ENCODE measurements at regions of chr16 and their contacts with region 1.

Region 1: GRCh38 chr16:89330177-89330856 is 112.8 kb downstream of the ZNF778 start:
- DNase-seq: peak in 6 of 9 experiments; percentile 23 to 85 (median 51)
- ATAC-seq: peak; percentile 55
- H3K4me3 ChIP-seq: peak overlapping the region; percentile 16 to 43
- H3K4me3 Mint-ChIP-seq: peak overlapping the region; percentile 60
- H3K27ac ChIP-seq: peak overlapping the region; percentile 45 to 81
- H3K27ac Mint-ChIP-seq: peak overlapping the region; percentile 73
- H3K4me1 ChIP-seq: peaks cover 77% of the 10 kb centered on the region
- H3K4me1 Mint-ChIP-seq: peaks cover 83% of the 10 kb centered on the region
- H3K27me3 ChIP-seq: no peaks in the 10 kb centered on the region
- H3K27me3 Mint-ChIP-seq: no peaks in the 10 kb centered on the region
- CTCF ChIP-seq: no peak

Region 2: DNA sequence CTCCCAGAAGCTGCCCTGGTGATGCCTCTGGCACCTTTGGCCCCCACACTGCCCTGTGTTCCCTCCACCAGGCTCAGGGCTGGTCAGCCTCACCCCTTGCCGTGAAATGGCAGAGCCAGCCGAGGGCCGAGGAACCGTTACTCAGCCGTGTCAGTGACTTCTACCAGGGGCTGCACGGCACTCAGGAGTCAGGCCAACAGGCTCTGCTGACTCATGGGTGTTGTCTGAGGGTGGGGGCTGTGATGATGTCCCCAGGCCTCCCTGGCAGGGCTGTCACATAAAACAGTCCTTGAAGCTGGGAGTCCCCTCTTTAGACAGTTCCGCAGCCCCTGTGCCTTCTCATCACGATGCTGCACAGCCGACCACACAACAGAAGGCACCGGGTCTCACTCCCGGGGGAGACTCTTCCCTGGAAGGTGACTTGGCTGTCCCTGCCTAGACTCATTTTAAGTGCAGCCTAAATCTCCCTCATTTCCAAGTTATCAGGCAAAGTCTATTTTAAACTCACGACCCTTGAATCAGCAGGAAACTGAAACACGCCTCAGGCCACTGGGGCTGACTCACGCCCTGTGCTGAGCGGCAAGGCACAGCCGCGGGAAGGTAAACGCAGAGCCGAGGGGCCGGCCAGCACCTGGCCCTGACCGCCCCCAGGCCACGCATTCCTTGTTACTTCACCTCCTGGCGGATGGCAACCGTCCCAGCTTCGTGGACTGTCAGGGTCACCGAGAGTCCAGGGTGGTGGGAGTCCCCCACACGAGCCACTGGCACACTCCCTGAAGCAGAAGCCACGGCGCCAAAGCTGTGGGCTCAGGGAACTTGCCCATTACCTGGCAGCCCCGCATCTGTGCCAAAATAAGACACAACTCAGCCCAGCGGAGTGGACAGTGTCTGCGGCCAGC is 10.2 kb before region 1 on chr16:
- CTCF ChIA-PET with region 1: interaction called, 5 read pairs
- POLR2A ChIA-PET with region 1: interaction called, 5 read pairs
- intact Hi-C with region 1: loop called in 1 of 2 experiments (anchors 2 kb)
- DNase-seq: peak in 6 of 9 experiments; percentile 17 to 52 (median 40)
- ATAC-seq: no peak
- H3K4me3 ChIP-seq: peak overlapping the region in 1 of 2 experiments; percentile 12
- H3K4me3 Mint-ChIP-seq: peak overlapping the region; percentile 57
- H3K27ac ChIP-seq: peak overlapping the region in 1 of 2 experiments; percentile 43
- H3K27ac Mint-ChIP-seq: peak overlapping the region; percentile 77
- H3K4me1 ChIP-seq: peaks cover 88% of the 10 kb centered on the region
- H3K4me1 Mint-ChIP-seq: peaks cover 92% of the 10 kb centered on the region
- H3K27me3 ChIP-seq: no peaks in the 10 kb centered on the region
- H3K27me3 Mint-ChIP-seq: no peaks in the 10 kb centered on the region
- CTCF ChIP-seq: no peak

Region 3: DNA sequence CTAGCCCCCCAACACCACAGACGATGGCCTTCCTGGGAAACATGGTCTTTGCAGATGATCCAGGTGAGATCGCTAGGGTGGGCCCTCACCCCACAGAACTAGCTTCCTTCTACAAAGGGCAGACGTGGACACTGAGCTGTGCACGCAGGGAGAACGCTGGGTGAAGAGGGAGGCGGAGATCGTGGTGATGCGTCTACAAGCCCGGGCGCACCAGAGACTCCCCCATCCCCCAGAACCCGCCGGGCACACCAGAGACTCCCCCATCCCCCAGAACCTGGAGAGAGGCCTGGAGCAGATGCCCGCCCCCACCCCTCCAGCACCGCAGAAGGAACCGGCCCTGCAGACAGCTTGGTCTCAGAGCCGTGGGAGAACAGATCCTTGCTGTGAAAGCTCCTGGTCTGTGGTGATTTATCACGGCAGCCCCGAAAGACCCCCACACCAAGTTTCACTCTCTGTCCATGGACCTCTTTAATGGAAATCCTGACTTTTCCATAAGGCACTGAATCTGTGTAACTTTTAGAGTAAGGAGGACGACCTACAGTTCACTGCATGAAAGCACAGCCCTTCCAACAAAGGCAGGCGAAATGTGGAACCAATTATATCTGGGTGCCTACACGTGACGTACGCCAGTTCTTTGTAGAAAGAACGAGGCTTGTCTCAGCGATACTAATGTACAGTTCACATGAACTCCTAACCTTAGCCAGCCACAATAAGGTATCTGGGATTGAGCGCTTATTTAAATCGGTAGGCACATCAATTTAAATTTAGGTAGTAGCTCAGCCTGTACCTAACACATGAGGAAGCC is 71.5 kb after region 1 on chr16:
- CTCF ChIA-PET with region 1: interaction called, 3 read pairs
- POLR2A ChIA-PET with region 1: no interaction called
- intact Hi-C with region 1: loop called in 1 of 2 experiments (anchors 5 kb)
- DNase-seq: no peak
- ATAC-seq: no peak
- H3K4me3 ChIP-seq: no peak overlapping the region
- H3K4me3 Mint-ChIP-seq: peak overlapping the region; percentile 26
- H3K27ac ChIP-seq: peak overlapping the region in 1 of 2 experiments; percentile 51
- H3K27ac Mint-ChIP-seq: peak overlapping the region; percentile 66
- H3K4me1 ChIP-seq: peaks cover 77% of the 10 kb centered on the region
- H3K4me1 Mint-ChIP-seq: peaks cover 83% of the 10 kb centered on the region
- H3K27me3 ChIP-seq: no peaks in the 10 kb centered on the region
- H3K27me3 Mint-ChIP-seq: no peaks in the 10 kb centered on the region
- CTCF ChIP-seq: no peak

Measured in CD8-positive, alpha-beta T cell (primary cell).